HEK293T (cell line): ENCODE measurements at regions of chr5 and their contacts with region 1.

Region 1: DNA sequence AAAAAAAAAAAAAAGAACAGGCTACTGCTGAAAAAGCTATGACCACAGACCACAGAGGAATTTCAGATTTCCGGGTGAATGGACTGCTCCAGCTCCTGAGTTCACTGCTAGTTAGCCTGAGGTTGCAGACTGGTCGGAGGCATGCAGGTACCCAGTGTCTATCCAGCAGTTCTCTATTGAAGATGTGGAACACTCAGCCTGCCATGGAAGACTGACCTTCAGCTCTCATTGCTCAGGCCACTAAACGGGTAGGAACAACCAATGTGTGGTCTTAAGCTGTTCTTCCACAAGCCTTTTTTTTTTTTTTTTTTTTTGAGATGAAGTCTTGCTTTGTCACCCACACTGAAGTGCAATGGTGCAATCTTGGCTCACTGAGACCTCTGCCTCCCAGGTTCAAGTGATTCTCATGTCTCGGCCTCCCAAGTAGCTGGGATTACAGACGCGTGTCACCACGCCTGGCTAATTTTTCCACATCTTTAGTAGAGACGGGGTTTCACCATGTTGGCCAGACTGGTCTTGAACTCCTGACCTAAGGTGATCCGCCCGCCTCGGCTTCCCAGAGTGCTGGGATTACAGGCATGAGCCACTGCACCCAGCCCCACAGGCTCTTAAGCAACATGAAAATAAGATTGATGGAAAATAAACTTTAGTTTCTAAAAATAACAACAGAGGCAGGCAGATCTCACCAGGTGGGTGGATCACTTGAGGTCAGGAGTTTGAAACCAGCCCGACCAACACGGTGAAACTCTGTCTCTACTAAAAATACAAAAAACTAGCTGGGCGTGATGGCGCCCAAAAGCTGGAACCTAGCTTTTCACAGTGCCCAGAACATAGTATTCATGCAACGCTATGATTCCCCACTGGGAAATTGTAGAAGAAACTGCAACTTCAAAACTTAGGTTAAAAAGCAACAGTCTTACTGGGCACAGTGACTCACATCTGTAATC is 20.0 kb upstream of the NPM1 start:
- DNase-seq: no peak

Region 2: DNA sequence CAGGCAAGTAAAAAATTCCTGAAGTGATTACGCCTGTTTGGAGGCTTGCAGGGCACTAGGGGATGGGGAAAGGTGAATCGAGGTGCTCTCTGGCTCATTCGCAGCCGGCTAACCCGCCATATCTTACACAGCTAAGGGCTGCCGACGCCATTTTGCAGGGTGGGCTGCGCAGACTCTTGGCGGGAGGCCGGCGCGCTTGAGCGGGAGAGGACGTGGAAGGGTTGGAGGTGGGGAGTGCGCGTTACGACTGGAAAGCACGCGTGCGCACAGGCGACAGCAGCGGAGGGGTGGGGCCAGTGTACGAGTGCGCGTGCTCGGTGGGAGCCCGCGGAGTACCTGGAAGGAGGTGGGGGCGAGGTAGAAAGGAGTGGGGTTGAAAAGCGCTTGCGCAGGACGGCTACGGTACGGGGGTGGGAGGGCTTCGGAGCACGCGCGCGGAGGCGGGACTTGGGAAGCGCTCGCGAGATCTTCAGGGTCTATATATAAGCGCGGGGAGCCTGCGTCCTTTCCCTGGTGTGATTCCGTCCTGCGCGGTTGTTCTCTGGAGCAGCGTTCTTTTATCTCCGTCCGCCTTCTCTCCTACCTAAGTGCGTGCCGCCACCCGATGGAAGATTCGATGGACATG is 19.8 kb after region 1 on chr5 and contains the start of gene NPM1:
- CTCF ChIA-PET with region 1: interaction called, 4 read pairs
- POLR2A ChIA-PET with region 1: interaction called, 22 read pairs
- DNase-seq: peak; percentile 100

Region 3: DNA sequence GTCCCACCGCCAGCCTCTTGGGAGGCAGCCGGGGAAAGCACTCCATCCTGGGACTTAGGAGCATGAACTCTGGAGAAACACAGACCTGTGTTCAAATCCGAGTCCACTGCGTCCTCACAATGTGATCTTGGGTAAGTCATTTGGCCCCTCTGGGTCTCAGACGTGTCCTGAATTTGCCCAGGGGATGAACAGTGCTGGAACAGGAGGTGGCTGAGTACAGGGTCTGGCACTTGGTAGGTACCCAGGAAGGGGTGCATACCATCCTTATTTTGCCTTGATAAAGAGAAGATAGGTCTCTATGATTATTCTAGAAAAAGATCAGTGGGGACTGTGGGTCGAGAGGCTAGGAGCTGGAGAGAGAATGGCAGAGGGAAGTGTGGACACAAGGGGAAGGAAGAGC is 187.5 kb after region 1 on chr5:
- CTCF ChIA-PET with region 1: no interaction called
- POLR2A ChIA-PET with region 1: no interaction called
- DNase-seq: no peak